HEK293 (cell line): ENCODE measurements at regions of chr20 and their contacts with region 1.

Region 1: DNA sequence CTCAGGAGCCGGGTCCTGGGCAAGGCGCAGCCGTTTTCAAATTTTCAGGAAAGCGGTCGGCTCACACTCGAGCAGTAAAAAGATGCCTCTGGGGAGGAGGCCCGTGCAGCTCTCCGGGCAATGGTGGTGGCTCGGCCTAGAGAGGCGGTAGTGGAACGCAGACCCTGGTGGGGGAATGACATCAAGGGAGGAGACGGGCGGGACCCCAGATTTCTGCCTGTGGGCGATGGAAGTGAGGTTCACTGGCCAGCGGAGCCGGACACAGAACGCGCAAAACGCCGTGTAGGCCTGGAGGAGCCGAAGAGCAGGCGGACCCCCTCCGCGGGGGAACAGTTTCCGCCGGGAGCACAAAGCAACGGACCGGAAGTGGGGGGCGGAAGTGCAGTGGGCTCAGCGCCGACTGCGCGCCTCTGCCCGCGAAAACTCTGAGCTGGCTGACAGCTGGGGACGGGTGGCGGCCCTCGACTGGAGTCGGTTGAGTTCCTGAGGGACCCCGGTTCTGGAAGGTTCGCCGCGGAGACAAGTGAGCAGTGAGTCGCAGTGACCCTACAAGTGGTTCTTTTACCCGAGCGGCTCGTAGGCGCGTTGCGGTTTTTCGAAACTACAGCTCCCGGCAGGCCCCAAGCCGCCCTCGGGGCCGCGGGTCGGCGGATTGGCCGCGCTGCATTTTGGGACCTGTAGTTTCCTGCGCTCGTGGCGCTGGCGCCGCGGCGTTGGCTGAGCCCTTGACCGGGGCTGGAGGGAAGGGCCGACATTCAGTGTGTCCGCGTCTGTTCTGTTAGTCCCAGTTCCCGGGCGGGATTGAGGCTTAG is at the start of gene RTEL1:
- H3K4me3 ChIP-seq: peak within 1 kb of the TSS; percentile 93
- H3K27ac ChIP-seq: peak within 1 kb of the TSS; percentile 81
- H3K4me1 ChIP-seq: no peaks in the 10 kb centered on the region
- CTCF ChIP-seq: no peak

Region 2: DNA sequence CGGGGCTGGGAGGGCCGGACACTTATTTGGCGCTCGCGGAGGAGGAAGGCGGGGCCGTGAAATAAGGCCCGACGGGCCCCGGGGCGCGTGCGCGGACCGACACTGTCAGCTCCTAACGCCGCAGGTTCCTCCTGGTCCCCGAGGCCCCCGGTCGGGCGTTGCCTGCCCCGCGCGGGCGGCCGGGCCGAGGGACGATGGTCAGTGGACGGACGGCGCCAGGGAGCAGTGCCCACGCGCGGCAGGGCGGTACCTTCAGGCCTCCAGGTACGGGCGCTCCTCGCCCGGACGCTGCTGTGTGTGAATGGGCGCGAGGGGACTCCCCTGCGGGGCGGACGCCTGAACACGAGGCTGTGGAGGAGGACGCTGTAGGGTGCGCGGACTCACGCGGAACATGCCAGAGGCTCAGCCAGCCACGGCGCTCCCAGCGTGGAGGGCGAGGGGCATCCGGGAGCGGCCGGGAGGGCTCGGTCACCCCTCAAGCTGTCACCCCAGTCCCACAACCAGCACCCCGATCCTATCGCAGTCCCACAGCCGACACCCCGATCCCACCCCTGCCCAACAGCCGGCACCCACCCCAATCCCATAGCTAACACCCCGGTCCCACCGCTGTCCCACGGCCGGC is 30.9 kb before region 1 on chr20:
- CTCF ChIA-PET with region 1: no interaction called
- POLR2A ChIA-PET with region 1: interaction called, 15 read pairs
- H3K4me3 ChIP-seq: peak overlapping the region; percentile 89
- H3K27ac ChIP-seq: peak overlapping the region; percentile 98
- H3K4me1 ChIP-seq: no peaks in the 10 kb centered on the region
- CTCF ChIP-seq: peak; percentile 46; the same call in 1 of the 2 replicates

Region 3: DNA sequence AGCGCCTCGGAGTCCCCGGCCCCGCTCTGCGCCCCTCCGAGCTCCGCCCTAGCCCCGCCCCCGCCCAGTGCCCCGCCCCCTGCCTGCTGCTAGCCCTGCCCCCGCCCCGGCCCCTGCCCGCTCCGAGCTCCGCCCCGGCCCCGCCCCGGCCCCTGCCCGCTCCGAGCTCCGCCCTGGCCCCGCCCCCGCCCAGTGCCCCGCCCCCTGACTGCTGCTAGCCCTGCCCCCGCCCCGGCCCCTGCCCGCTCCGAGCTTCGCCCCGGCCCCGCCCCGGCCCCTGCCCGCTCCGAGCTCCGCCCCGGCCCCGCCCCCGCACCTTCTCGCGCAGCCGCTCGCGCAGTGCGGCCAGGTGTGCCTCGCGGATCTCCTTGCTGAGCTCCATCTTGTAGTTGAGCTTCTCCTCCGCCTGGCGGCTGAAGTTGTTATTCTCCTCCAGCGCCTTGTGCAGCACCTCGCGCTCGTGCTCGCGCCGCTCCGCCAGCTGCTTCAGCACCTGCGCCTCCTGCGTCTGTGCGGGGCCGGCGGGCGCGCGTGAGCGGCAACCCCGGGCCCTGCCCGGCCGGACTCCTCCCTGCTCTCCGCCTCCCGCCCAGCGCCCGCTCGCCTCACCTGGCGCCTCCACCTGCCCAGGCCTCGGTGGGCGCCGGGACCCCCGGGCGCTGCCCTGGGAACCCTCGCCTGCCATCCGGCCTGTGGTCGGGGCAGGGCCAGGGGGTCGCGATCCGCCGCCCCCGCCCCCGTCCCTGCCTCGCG is 16.2 kb before region 1 on chr20:
- CTCF ChIA-PET with region 1: interaction called, 4 read pairs
- POLR2A ChIA-PET with region 1: interaction called, 17 read pairs
- H3K4me3 ChIP-seq: peak overlapping the region; percentile 32
- H3K27ac ChIP-seq: peak overlapping the region; percentile 64; the same call in 1 of the 2 replicates
- H3K4me1 ChIP-seq: peaks cover 3% of the 10 kb centered on the region; the same call in 1 of the 2 replicates
- CTCF ChIP-seq: peak; percentile 44

Region 4: DNA sequence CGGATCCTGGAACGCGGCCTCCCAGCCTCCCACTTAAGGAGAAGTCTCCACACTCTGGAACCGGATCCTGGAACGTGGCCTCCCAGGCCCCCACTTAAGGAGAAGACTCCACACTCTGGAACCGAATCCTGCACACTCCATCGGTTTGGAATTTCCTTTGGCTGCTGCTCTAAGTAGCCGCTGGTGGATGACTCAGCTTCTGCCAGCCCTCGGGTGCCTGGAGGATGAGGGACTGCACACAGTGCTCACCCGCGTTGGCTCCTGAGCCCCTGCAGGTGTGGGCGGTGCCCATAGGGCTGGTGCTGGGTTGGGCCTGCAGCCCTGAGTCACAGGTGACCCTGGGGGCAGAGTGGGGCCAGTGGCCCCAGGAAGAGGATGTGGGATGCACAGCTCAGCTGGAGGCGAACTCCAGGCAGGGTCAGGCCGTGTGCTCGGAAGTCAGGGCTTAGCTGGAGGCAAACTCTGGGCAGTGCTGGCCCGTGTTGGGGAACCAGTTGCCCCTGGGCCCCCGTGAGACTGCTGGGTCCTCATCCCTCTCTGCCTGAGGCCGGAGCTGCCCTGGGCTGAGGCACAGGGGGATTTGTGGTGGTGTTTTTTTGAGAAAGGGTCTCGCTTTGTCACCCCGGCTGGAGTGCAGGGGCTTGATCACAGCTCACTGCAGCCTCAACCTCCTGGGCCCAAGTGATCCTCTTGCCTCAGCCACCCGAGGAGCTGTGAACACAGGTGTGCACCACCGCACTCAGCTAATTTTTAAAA is 24.4 kb after region 1 on chr20:
- CTCF ChIA-PET with region 1: no interaction called
- POLR2A ChIA-PET with region 1: interaction called, 14 read pairs
- H3K4me3 ChIP-seq: no peak overlapping the region
- H3K27ac ChIP-seq: no peak overlapping the region
- H3K4me1 ChIP-seq: no peaks in the 10 kb centered on the region
- CTCF ChIP-seq: no peak